Posterior cingulate gyrus (tissue), 11 donors: ENCODE measurements at regions of chr7 and their contacts with region 1.

Region 1: DNA sequence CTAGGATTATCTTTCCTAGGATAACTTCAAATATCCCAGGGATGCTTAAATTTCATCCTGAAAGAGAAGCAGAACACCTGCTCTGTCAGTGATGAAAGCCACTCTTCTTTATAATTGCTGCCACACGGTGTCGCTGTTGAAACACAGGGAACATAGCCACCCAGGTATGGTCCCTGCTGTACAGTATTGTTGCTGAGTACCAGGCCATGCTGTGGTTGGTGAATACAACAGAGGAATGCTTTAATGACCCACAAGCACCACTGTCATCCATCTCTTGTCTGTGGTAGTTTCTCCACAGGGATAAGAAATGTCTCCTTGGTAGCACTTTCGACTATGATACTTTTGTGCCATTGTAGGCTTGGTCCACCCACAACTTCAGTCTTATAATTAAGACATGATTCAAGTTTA is 70.6 kb upstream of the STARD3NL start:
- DNase-seq: peak in 7 of 10 donors; percentile 9 to 83 (median 66)

Region 2: GRCh38 chr7:37901236-37901827 is 206.2 kb before region 1 on chr7:
- intact Hi-C with region 1: loop called (anchors 5 kb)
- DNase-seq: no peak

Region 3: DNA sequence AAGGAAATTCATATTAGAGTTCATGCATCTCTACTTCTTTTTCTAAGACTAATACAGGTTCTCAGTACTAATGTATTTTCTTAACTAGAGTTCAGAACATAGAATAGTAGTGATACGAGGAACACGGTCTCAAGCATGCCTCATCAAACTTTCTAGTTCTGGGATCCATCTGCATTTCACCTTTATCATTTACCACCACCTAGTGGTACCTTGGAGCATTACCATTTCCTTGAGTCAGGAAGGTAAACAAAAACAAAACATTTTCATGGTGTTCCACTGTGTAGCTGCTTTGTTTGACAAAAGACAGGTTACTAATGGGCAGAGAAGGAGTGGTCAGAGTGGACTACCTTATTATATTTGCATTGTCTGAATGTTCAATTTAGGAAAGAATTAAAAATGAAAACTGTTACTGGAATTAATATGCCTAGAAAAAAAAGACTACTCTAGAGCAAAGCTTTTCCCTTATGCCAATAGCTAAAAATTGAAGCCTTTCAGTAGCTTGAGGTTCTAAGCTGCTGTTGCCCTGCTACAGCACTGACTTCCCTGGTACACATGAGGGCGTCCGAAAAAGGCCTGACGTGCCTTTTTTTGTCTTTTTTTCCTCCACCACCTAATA is 115.1 kb after region 1 on chr7:
- intact Hi-C with region 1: loop called (anchors 2 kb)
- DNase-seq: no peak

Region 4: DNA sequence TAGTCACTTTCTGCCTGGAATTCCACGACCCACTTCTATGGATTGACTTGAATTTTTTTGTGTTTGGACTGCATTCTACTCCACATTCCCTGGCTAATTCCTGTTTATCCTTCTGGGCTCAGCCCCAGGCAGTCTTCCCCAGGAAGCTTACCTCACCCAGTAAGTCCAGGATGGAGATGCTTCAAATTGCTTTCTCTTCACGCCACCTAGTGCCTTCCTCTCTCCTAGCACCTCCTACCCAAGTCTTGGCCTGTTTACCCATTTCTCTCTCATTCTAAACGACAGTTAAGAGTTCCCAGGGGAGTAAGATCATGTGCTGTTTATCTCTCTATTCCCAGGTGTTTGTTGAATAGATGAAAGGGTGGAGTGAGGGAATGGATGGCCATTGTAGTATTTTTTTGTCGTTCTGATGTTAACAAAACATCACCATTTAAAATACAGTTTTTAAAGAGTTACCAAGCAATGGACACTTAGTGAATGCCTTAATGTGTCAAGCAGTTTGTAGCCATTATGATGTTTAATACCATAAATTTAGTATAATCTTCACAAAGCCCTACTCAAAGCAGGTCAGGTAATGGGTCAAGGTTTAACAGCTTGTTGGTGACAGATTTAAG is 211.4 kb after region 1 on chr7:
- intact Hi-C with region 1: loop called (anchors 2 kb)
- DNase-seq: peak in 1 of 10 donors; percentile 27

Region 5: GRCh38 chr7:38369816-38370493 is 262.5 kb after region 1 on chr7:
- intact Hi-C with region 1: loop called (anchors 5 kb)
- DNase-seq: peak; percentile 75 to 98 (median 90)

Region 6: GRCh38 chr7:38506756-38507155 is 399.3 kb after region 1 on chr7:
- intact Hi-C with region 1: no loop called
- DNase-seq: peak in 1 of 10 donors; percentile 39